ENCODE measurements at regions of chr2 and their contacts with region 1.

Region 1: GRCh38 chr2:219430633-219431615 is 3.7 kb upstream of the SPEG start:
- DNase-seq: peak in 4 of 5 donors; percentile 70 to 88 (median 80)
- ATAC-seq: peak; percentile 70 to 81 (median 74)
- H3K4me3 ChIP-seq: no peak overlapping the region
- H3K27ac ChIP-seq: peak overlapping the region in 11 of 12 donors; percentile 35 to 96 (median 75)
- H3K4me1 ChIP-seq: peaks cover 0 to 31% (median 7%) of the 10 kb centered on the region in 12 donors
- H3K27me3 ChIP-seq: peaks cover 0 to 20% (median 9%) of the 10 kb centered on the region in 9 donors
- CTCF ChIP-seq: peak in 8 of 12 donors; percentile 18 to 49 (median 36)
- POLR2A ChIP-seq: no peak

Region 2: DNA sequence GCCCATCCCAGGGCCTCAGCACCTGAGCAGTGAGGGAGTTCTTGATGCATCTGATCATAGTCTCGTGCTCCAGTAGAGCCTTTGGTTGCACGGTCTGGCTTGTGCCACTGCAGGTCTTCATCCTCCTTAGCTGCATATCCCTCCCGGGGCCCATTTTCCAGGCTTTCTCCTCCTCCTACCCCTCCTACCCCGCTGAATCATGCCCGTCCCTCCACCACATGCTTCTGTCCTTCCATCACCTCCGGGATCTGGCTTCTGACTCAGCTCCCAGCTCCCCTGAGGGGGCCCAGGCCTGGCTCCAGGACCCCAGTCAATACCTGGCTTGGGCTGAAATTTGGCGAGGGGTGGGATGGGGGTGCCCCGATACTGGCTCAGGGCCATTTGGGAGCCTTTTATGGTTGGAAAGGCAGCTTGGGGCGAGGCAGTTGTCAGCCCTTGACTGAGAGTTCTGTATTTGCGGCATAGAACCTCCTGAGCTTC is 22.0 kb after region 1 on chr2:
- intact Hi-C with region 1: loop called in 1 of 10 experiments (anchors 2 kb)
- DNase-seq: peak; percentile 64 to 86 (median 68)
- ATAC-seq: peak; percentile 45 to 81 (median 70)
- H3K4me3 ChIP-seq: no peak overlapping the region
- H3K27ac ChIP-seq: peak overlapping the region; percentile 78 to 96 (median 90)
- H3K4me1 ChIP-seq: peaks cover 0 to 49% (median 19%) of the 10 kb centered on the region in 12 donors
- H3K27me3 ChIP-seq: peaks cover 0 to 21% (median 0%) of the 10 kb centered on the region in 9 donors
- CTCF ChIP-seq: no peak
- POLR2A ChIP-seq: no peak